IMR-90 (cell line): ENCODE measurements at regions of chr7 and their contacts with region 1.

Region 1: GRCh38 chr7:95871078-95871782 is 98.9 kb downstream of the DYNC1I1 start:
- DNase-seq: peak; percentile 45
- ATAC-seq: peak; percentile 88
- H3K4me3 ChIP-seq: no peak overlapping the region
- H3K27ac ChIP-seq: no peak overlapping the region
- H3K4me1 ChIP-seq: no peaks in the 10 kb centered on the region
- H3K27me3 ChIP-seq: no peaks in the 10 kb centered on the region
- CTCF ChIP-seq: peak; percentile 58
- POLR2A ChIP-seq: no peak
- RAD21 ChIP-seq: peak; percentile 51

Region 2: GRCh38 chr7:95527033-95527775 is 344.0 kb before region 1 on chr7:
- CTCF ChIA-PET with region 1: no interaction called
- POLR2A ChIA-PET with region 1: no interaction called
- dilution Hi-C with region 1: no loop called
- in situ Hi-C with region 1: no loop called
- intact Hi-C with region 1: loop called (anchors 5 kb)
- DNase-seq: peak; percentile 44
- ATAC-seq: peak; percentile 91
- H3K4me3 ChIP-seq: no peak overlapping the region
- H3K27ac ChIP-seq: no peak overlapping the region
- H3K4me1 ChIP-seq: no peaks in the 10 kb centered on the region
- H3K27me3 ChIP-seq: peaks cover 11% of the 10 kb centered on the region
- CTCF ChIP-seq: peak; percentile 86
- POLR2A ChIP-seq: no peak
- RAD21 ChIP-seq: peak; percentile 80

Region 3: DNA sequence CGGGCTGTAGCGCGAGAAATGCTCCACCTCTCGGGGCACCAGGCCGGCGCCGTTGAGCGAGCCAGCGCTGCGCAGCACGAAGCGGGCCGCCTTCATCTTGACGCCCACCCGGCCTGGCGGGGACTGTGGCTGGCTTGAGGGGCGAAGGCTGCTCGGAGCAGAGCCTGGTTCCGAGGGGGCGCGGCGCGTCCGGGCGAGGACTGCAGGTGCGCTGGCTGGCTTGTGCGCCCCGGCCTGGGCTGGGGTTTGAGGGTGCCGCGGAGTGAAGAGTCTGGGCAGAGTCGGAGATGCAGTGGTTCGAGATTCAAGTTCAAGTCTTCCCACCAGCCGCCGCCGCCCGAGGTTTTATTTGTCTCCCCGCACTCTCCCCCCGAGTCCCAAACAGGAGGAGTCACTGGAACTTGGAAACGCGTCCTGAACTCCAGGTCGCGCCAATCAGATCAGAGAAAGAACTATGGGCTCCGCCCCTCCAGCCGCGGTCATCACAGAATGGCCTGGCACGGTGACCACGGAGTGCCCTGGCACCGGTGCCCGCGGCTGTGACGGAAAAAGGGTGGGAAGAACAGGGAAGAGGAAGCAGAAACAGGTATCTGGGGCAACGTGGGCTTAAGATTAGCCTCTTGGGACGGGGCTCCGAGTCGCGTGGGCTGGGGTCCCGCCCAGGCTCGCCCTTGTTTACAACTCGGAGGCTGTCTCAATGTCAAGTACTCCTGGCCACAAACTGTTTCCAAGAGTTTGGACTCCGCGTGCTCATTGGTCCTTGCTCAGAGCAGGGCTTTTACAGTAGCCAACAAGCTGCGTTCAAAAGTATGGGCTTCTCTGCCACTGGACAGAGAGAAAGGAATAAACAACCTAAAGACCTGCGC is 274.8 kb before region 1 on chr7 and contains the start of gene PDK4:
- CTCF ChIA-PET with region 1: no interaction called
- POLR2A ChIA-PET with region 1: no interaction called
- dilution Hi-C with region 1: no loop called
- in situ Hi-C with region 1: no loop called
- intact Hi-C with region 1: no loop called
- DNase-seq: peak; percentile 40
- ATAC-seq: peak; percentile 98
- H3K4me3 ChIP-seq: peak within 1 kb of the TSS; percentile 59
- H3K27ac ChIP-seq: peak within 1 kb of the TSS; percentile 13; the same call in 1 of the 2 replicates
- H3K4me1 ChIP-seq: peaks cover 3% of the 10 kb centered on the region
- H3K27me3 ChIP-seq: no peaks in the 10 kb centered on the region; the same call in 1 of the 2 replicates
- CTCF ChIP-seq: no peak
- POLR2A ChIP-seq: no peak
- RAD21 ChIP-seq: no peak
- total RNA-seq, gene PDK4: under 0.01 TPM in 2 replicates

Region 4: DNA sequence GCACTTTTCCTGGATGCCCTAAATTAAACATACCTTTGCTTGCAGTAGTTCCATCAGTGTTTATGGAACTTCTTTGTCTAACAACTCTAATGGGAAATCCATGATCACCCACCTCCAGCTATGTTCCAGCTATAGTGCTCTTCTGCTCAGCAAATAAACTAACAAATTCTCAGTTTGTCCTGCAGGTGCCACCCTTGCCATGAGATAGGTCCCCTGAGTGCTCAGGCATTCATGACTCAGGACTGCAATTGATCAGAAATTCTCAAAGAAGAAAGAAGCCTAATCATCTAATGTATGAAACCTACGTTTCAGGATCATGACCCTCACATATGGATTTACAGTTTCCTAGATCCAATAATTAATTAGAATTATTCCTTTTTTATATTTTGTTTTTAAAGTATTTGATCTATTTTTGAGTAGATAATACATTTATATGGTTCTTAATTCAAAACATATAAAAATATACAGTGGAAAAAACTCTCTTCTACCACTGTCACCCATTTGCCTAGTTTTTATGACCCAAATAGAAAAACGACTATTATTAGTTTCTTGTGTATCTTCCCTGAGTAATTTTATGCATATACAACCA is 147.5 kb before region 1 on chr7:
- CTCF ChIA-PET with region 1: interaction called, 5 read pairs
- POLR2A ChIA-PET with region 1: no interaction called
- dilution Hi-C with region 1: no loop called
- in situ Hi-C with region 1: loop called (anchors 5 kb)
- intact Hi-C with region 1: loop called (anchors 1 kb)
- DNase-seq: peak; percentile 13
- ATAC-seq: 0 out of 2 replicates have a peak, but pooled peaks have one; percentile 57
- H3K4me3 ChIP-seq: no peak overlapping the region
- H3K27ac ChIP-seq: no peak overlapping the region
- H3K4me1 ChIP-seq: no peaks in the 10 kb centered on the region
- H3K27me3 ChIP-seq: no peaks in the 10 kb centered on the region
- CTCF ChIP-seq: peak; percentile 36
- POLR2A ChIP-seq: no peak
- RAD21 ChIP-seq: peak; percentile 40

Region 5: GRCh38 chr7:95794917-95795515 is 76.2 kb before region 1 on chr7:
- CTCF ChIA-PET with region 1: no interaction called
- POLR2A ChIA-PET with region 1: no interaction called
- dilution Hi-C with region 1: no loop called
- in situ Hi-C with region 1: no loop called
- intact Hi-C with region 1: loop called (anchors 2 kb)
- DNase-seq: peak; percentile 30
- ATAC-seq: no peak
- H3K4me3 ChIP-seq: no peak overlapping the region
- H3K27ac ChIP-seq: no peak overlapping the region
- H3K4me1 ChIP-seq: no peaks in the 10 kb centered on the region
- H3K27me3 ChIP-seq: no peaks in the 10 kb centered on the region
- CTCF ChIP-seq: peak; percentile 36; the same call in 1 of the 2 replicates
- POLR2A ChIP-seq: no peak
- RAD21 ChIP-seq: no peak

Region 6: GRCh38 chr7:95817866-95818640 is 53.2 kb before region 1 on chr7:
- CTCF ChIA-PET with region 1: no interaction called
- POLR2A ChIA-PET with region 1: no interaction called
- dilution Hi-C with region 1: no loop called
- in situ Hi-C with region 1: no loop called
- intact Hi-C with region 1: no loop called
- DNase-seq: no peak
- ATAC-seq: no peak
- H3K4me3 ChIP-seq: no peak overlapping the region
- H3K27ac ChIP-seq: no peak overlapping the region
- H3K4me1 ChIP-seq: no peaks in the 10 kb centered on the region
- H3K27me3 ChIP-seq: no peaks in the 10 kb centered on the region
- CTCF ChIP-seq: no peak
- POLR2A ChIP-seq: no peak
- RAD21 ChIP-seq: no peak

Region 7: DNA sequence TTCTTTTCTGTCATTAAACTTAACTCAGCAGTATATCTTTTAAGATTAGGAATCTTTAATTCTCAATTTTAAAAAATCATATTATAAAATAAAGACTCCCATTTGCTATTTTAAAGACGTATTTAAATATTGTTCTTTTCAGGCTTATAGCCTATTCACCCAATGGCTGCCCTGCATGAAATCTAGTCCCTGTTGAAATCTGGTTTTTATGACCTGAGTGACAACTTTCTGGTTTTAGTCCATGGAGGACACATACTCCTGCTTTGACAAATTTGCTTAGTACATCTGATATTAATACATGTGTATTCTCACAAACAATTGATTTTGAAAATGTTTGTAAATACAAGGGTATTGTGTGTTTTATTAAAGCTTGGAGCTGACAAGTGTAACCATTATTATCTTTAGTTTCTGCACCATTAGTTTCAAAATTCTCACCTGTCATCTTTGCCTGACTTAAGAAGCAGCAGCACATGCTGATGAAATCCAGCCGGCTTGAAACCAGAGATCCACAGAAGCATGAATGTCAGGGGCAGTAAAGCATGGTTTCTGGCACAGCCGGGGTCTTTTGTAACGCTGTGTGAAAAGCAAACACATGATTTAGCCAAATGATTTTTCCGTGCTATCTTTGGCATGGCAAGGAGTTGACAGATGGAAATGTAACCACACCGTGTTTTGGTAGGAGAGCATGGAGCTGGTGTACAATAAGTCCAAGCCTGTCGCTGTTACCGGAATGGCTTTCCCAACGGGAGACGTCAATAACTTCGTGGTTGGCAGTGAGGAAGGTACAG is 163.9 kb after region 1 on chr7:
- CTCF ChIA-PET with region 1: no interaction called
- POLR2A ChIA-PET with region 1: no interaction called
- dilution Hi-C with region 1: no loop called
- in situ Hi-C with region 1: no loop called
- intact Hi-C with region 1: no loop called
- DNase-seq: no peak
- ATAC-seq: no peak
- H3K4me3 ChIP-seq: no peak overlapping the region
- H3K27ac ChIP-seq: no peak overlapping the region
- H3K4me1 ChIP-seq: no peaks in the 10 kb centered on the region
- H3K27me3 ChIP-seq: 0 out of 2 replicates have a peak, but pooled peaks cover 2% of the 10 kb centered on the region
- CTCF ChIP-seq: no peak
- POLR2A ChIP-seq: no peak
- RAD21 ChIP-seq: no peak